Right ventricle myocardium inferior (tissue), 1 donor: ENCODE measurements at regions of chr10 and their contacts with region 1.

Region 1: GRCh38 chr10:91632671-91633550 is at the start of gene PPP1R3C:
- DNase-seq: peak; percentile 94
- ATAC-seq: peak; percentile 97
- total RNA-seq, gene PPP1R3C: 137 TPM

Region 2: GRCh38 chr10:91389636-91390512 is 243.0 kb before region 1 on chr10:
- intact Hi-C with region 1: loop called (anchors 5 kb)
- DNase-seq: no peak
- ATAC-seq: peak; percentile 60

Region 3: DNA sequence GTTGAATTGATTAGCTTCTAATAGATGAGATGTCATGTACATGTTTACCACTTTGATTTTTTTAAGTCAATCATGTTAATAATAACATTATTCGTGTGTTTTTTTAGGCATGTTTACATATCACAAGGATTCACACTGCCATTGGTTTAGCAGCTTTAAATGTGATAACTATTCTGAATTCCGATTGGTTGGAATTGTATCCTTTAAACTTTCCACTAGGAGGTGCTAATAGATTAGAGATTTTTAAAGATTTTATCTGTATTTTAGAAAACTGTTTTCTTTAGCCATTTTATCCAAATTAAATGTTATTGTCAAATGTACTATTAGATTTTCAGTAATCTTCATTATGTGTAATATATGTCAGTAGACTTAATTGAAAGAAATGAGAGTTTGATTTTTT is 139.6 kb before region 1 on chr10:
- intact Hi-C with region 1: loop called (anchors 1 kb)
- DNase-seq: no peak
- ATAC-seq: no peak

Region 4: GRCh38 chr10:91590142-91590903 is 42.6 kb before region 1 on chr10:
- intact Hi-C with region 1: loop called (anchors 1 kb)
- DNase-seq: no peak
- ATAC-seq: no peak

Region 5: GRCh38 chr10:91797874-91798648 is 165.2 kb after region 1 on chr10 and contains the start of gene TNKS2:
- intact Hi-C with region 1: loop called (anchors 2 kb)
- DNase-seq: peak; percentile 97
- ATAC-seq: peak; percentile 95
- total RNA-seq, gene TNKS2: 13.5 TPM